ENCODE measurements at regions of chr7 and their contacts with region 1.

Region 1: DNA sequence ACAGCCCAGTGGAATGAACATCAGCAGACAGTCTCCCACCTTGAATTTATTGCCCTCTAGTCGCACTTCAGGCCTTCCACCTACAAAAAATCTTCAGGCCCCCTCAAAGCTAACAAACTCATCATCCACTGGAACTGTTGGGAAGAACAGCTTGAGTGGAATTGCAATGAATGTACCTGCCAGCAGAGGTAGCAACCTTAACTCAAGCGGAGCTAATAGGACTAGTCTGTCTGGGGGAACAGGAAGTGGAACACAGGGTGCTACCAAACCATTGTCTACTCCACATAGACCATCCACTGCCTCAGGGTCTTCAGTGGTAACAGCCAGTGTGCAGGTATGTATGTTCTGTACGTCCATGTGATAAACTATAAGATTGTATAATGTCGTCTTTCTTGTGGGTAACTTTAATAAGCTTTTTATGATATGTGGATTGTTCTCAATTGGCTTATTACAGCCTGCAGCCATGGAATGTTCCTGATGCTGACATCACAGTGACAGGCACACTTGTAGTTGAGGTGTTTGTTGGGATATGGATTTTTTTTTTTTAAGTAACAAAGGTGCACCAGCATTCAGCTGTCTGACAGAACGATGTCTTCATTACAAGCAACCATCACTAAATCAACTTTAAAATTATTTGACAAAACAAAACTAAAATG is 53.3 kb downstream of the UBN2 start:
- DNase-seq: peak in 1 of 4 experiments; percentile 20
- ATAC-seq: peak; percentile 79
- H3K4me3 ChIP-seq: no peak overlapping the region
- H3K27ac ChIP-seq: no peak overlapping the region
- H3K4me1 ChIP-seq: no peaks in the 10 kb centered on the region
- H3K27me3 ChIP-seq: no peaks in the 10 kb centered on the region
- CTCF ChIP-seq: peak in 2 of 3 experiments; percentile 17 to 22; a peak in 1 of 6 replicates
- EP300 ChIP-seq: no peak
- POLR2A ChIP-seq: no peak
- RAD21 ChIP-seq: no peak

Region 2: GRCh38 chr7:139297795-139298194 is 13.4 kb after region 1 on chr7:
- CTCF ChIA-PET with region 1: no interaction called
- POLR2A ChIA-PET with region 1: interaction called, 20 read pairs
- in situ Hi-C with region 1: no loop called
- intact Hi-C with region 1: no loop called
- DNase-seq: no peak
- ATAC-seq: no peak
- H3K4me3 ChIP-seq: no peak overlapping the region
- H3K27ac ChIP-seq: no peak overlapping the region
- H3K4me1 ChIP-seq: no peaks in the 10 kb centered on the region
- H3K27me3 ChIP-seq: no peaks in the 10 kb centered on the region
- CTCF ChIP-seq: no peak
- EP300 ChIP-seq: no peak
- POLR2A ChIP-seq: no peak
- RAD21 ChIP-seq: no peak